Cardiac septum (tissue), 1 donor: ENCODE measurements at regions of chr17 and their contacts with region 1.

Region 1: DNA sequence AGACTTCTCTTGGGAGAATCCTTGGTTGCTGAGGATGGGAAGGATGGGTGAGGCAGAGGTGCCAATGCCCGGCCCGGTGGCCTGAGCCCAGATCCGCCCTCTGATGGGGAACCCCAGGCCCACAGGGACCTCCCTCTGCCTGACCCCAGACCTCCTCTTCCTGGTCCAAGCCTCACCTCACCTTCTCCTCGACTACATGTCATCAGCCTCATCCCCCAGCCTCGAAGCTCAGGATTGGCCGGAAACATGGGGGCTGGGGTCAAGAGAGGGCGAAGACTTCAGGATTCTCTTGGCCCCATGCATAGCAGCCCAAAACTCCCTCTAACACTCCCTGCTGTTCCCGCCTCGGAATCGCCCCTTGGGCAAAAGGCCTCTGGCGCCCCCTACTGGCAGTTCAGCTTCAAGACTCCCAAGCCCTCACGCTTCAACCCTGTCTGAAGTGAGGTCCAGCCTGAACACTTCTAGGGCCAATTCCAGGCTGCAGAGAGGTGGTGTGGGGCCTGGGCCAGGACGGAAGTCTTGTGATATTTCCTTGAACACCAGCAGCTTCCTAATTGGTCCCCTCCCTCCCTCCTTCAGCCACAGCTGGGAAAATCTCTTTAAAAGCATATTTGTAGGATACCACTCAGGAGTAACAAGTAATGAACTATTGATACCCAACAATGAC is 47.2 kb downstream of the ARHGAP27 start:
- DNase-seq: peak; percentile 95

Region 2: GRCh38 chr17:45218895-45219661 is 166.4 kb before region 1 on chr17:
- intact Hi-C with region 1: loop called (anchors 2 kb)
- DNase-seq: peak; percentile 88

Region 3: GRCh38 chr17:45395569-45396415 is 10.3 kb after region 1 on chr17:
- intact Hi-C with region 1: no loop called
- DNase-seq: no peak